ENCODE measurements at regions of chr11 and their contacts with region 1.

Region 1: GRCh38 chr11:59135648-59136461 is 6.8 kb upstream of the FAM111A start:
- DNase-seq: peak; percentile 40
- ATAC-seq: peak; percentile 100
- H3K4me3 ChIP-seq: no peak overlapping the region
- H3K27ac ChIP-seq: no peak overlapping the region
- H3K4me1 ChIP-seq: no peaks in the 10 kb centered on the region
- H3K27me3 ChIP-seq: no peaks in the 10 kb centered on the region
- CTCF ChIP-seq: peak; percentile 99 to 100 (median 100); a peak in 5 of 6 replicates
- EP300 ChIP-seq: no peak
- POLR2A ChIP-seq: no peak
- RAD21 ChIP-seq: peak; percentile 99

Region 2: DNA sequence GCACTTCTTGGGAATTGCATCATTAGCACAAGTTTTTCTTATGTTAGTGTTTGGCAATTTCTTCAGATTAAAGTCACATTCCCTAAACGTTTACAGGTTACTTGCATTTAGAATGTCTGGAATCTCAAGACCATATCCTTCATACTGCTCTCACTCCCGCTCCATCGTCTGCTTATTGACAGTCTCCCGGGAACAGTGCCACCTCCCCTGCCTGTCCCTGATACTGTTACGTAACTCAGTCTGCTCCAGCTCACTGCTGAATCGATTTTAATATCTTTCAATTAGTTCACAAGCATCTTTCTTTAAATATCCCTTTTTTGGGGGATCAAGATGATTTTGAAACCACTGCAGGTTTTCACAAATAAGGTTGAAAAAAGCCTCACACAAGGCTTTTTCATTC is 339.5 kb before region 1 on chr11:
- CTCF ChIA-PET with region 1: no interaction called
- POLR2A ChIA-PET with region 1: no interaction called
- RAD21 ChIA-PET with region 1: no interaction called
- SMC1A ChIA-PET with region 1: no interaction called
- in situ Hi-C with region 1: no loop called
- intact Hi-C with region 1: loop called (anchors 10 kb)
- DNase-seq: no peak
- ATAC-seq: no peak
- H3K4me3 ChIP-seq: no peak overlapping the region
- H3K27ac ChIP-seq: no peak overlapping the region
- H3K4me1 ChIP-seq: no peaks in the 10 kb centered on the region
- H3K27me3 ChIP-seq: no peaks in the 10 kb centered on the region; a peak in 1 of 4 replicates
- CTCF ChIP-seq: no peak
- EP300 ChIP-seq: no peak
- POLR2A ChIP-seq: no peak
- RAD21 ChIP-seq: no peak

Region 3: GRCh38 chr11:58958500-58958899 is 177.4 kb before region 1 on chr11:
- CTCF ChIA-PET with region 1: interaction called, 27 read pairs
- POLR2A ChIA-PET with region 1: no interaction called
- RAD21 ChIA-PET with region 1: interaction called, 4 read pairs
- SMC1A ChIA-PET with region 1: interaction called, 5 read pairs
- in situ Hi-C with region 1: no loop called
- intact Hi-C with region 1: loop called (anchors 1 kb)
- DNase-seq: peak; percentile 2
- ATAC-seq: peak; percentile 92
- H3K4me3 ChIP-seq: no peak overlapping the region
- H3K27ac ChIP-seq: no peak overlapping the region
- H3K4me1 ChIP-seq: peaks cover 3% of the 10 kb centered on the region; the same call in 1 of the 2 replicates
- H3K27me3 ChIP-seq: no peaks in the 10 kb centered on the region
- CTCF ChIP-seq: peak; percentile 46 to 60 (median 51)
- EP300 ChIP-seq: no peak
- POLR2A ChIP-seq: no peak
- RAD21 ChIP-seq: peak; percentile 53

Region 4: DNA sequence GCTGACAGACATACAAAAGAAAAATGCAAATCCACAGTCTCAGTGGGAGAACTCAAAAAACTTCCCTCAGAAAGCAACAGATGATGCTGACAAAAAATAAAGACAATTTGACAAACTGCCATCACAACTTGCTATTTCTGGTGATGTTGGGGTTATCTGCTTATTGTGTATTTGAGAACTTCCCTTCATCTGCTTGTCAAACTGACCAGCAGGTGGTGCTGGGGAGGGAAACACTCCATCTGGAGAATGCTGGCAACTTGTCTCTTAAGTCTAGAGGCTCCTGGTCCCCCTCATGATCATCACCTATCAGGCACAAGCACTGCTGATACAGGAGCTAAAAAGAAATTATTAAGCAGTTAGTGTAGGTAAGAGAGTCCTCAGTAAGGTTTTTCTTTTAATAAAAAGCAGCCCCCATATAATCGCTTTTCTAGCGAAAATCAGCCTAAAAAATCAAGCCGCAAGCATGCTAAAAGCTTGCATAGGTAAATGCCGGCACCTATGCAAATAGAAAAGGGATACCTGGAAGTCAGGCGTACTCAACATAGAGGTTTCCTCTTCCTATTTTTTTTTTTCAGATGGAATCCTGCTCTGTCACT is 38.6 kb before region 1 on chr11:
- CTCF ChIA-PET with region 1: interaction called, 31 read pairs
- POLR2A ChIA-PET with region 1: interaction called, 3 read pairs
- RAD21 ChIA-PET with region 1: interaction called, 14 read pairs
- SMC1A ChIA-PET with region 1: interaction called, 18 read pairs
- in situ Hi-C with region 1: no loop called
- intact Hi-C with region 1: loop called (anchors 1 kb)
- DNase-seq: no peak
- ATAC-seq: peak; percentile 70
- H3K4me3 ChIP-seq: 0 out of 2 replicates have a peak overlapping the region, but pooled peaks have one; percentile 3
- H3K27ac ChIP-seq: peak overlapping the region; percentile 53
- H3K4me1 ChIP-seq: peaks cover 22% of the 10 kb centered on the region
- H3K27me3 ChIP-seq: no peaks in the 10 kb centered on the region
- CTCF ChIP-seq: peak; percentile 51 to 67 (median 63)
- EP300 ChIP-seq: no peak
- POLR2A ChIP-seq: no peak
- RAD21 ChIP-seq: peak; percentile 50

Region 5: GRCh38 chr11:59115553-59115952 is 20.3 kb before region 1 on chr11:
- CTCF ChIA-PET with region 1: interaction called, 11 read pairs
- POLR2A ChIA-PET with region 1: no interaction called
- RAD21 ChIA-PET with region 1: interaction called, 33 read pairs
- SMC1A ChIA-PET with region 1: interaction called, 21 read pairs
- in situ Hi-C with region 1: no loop called
- intact Hi-C with region 1: no loop called
- DNase-seq: no peak
- ATAC-seq: peak; percentile 9; the same call in 1 of the 3 replicates
- H3K4me3 ChIP-seq: no peak overlapping the region
- H3K27ac ChIP-seq: no peak overlapping the region
- H3K4me1 ChIP-seq: no peaks in the 10 kb centered on the region
- H3K27me3 ChIP-seq: no peaks in the 10 kb centered on the region
- CTCF ChIP-seq: no peak
- EP300 ChIP-seq: no peak
- POLR2A ChIP-seq: no peak
- RAD21 ChIP-seq: no peak

Measured in GM12878 (cell line).